Head of caudate nucleus (tissue), 42 donors: ENCODE measurements at regions of chr11 and their contacts with region 1.

Region 1: GRCh38 chr11:10307442-10308207 is 2.8 kb downstream of the ADM start:
- DNase-seq: peak; percentile 54 to 92 (median 82)

Region 2: DNA sequence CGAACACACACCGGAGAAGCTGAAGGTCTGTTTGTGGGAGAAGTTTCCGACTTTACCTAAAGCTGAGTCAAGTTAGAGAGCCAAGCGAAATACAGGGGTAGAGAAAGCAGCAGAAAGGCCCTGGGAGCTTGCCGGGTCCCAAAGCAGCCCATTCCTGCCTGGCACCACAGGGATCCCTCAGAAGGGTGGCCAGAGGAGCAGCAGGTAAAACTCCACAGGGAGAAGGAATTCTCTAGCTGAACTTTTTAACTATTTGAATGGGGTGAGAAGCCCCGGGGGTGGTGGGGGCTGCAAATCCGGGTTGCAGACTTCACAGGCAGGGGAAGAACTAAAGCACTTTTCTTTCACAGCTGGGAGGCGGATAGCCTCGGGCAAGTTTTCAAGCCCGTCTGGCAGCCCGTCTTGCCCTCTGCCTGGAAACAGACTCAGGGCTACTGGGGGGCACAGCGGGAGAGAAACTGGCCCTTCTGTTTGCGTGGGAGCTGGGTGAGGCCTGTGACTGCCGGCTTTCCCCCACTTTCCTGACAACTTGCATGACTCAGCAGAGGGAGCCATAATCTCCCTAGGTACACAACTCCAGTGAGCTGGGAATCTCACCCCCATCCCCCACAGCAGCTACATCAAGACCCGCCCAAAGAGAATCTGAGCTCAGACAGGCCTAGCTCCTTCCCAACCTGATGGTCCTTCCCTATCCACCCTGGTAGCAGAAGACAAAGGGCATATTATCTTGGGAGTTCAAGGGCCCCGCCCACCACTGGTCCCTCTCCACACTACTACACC is 324.6 kb before region 1 on chr11:
- intact Hi-C with region 1: loop called (anchors 10 kb)
- DNase-seq: peak in 32 of 42 donors; percentile 7 to 73 (median 40)

Region 3: DNA sequence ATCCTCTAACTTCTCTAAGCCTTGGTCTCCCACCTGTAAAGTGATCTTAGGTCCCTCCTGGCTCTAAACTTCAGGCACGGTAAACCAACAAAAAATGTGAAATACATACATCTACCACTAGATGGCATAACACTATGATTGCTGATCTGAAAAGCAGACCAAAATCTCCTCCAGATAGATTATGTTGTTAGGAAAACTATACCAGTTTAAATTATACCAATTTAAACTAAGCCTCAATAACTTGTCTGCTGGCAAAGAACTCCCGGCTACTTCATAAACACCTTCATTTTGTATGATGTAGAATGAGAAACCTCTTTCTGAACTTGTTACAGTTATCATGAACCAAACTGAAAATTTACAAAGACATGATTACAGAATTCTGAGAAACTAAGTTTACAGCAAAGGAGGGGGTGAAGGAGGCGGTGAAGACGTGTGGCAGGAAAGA is 99.5 kb before region 1 on chr11:
- intact Hi-C with region 1: loop called (anchors 5 kb)
- DNase-seq: peak in 1 of 42 donors; percentile 15